ENCODE measurements at regions of chr12 and their contacts with region 1.

Region 1: GRCh38 chr12:56041552-56042429 is at the start of gene RPS26:
- DNase-seq: peak; percentile 81 to 99 (median 89)
- ATAC-seq: peak; percentile 92
- H3K4me3 ChIP-seq: peak within 1 kb of the TSS; percentile 95
- H3K4me3 Mint-ChIP-seq: peak within 1 kb of the TSS; percentile 94
- H3K27ac ChIP-seq: peak within 1 kb of the TSS; percentile 88 to 90
- H3K27ac Mint-ChIP-seq: peak within 1 kb of the TSS; percentile 86
- H3K4me1 ChIP-seq: peaks cover 32% of the 10 kb centered on the region
- H3K4me1 Mint-ChIP-seq: peaks cover 51% of the 10 kb centered on the region
- H3K27me3 ChIP-seq: no peaks in the 10 kb centered on the region
- H3K27me3 Mint-ChIP-seq: no peaks in the 10 kb centered on the region
- CTCF ChIP-seq: peak; percentile 43
- total RNA-seq, gene RPS26: 118 to 126 TPM

Region 2: GRCh38 chr12:54439521-54440255 is 1602.1 kb before region 1 on chr12:
- CTCF ChIA-PET with region 1: no interaction called
- POLR2A ChIA-PET with region 1: no interaction called
- intact Hi-C with region 1: no loop called
- DNase-seq: peak in 3 of 14 experiments; percentile 61 to 76 (median 75)
- ATAC-seq: peak; percentile 97
- H3K4me3 ChIP-seq: no peak overlapping the region
- H3K4me3 Mint-ChIP-seq: no peak overlapping the region
- H3K27ac ChIP-seq: no peak overlapping the region
- H3K27ac Mint-ChIP-seq: no peak overlapping the region
- H3K4me1 ChIP-seq: peaks cover 4% of the 10 kb centered on the region
- H3K4me1 Mint-ChIP-seq: peaks cover 5% of the 10 kb centered on the region
- H3K27me3 ChIP-seq: no peaks in the 10 kb centered on the region
- H3K27me3 Mint-ChIP-seq: peaks cover 6% of the 10 kb centered on the region
- CTCF ChIP-seq: peak; percentile 87

Region 3: DNA sequence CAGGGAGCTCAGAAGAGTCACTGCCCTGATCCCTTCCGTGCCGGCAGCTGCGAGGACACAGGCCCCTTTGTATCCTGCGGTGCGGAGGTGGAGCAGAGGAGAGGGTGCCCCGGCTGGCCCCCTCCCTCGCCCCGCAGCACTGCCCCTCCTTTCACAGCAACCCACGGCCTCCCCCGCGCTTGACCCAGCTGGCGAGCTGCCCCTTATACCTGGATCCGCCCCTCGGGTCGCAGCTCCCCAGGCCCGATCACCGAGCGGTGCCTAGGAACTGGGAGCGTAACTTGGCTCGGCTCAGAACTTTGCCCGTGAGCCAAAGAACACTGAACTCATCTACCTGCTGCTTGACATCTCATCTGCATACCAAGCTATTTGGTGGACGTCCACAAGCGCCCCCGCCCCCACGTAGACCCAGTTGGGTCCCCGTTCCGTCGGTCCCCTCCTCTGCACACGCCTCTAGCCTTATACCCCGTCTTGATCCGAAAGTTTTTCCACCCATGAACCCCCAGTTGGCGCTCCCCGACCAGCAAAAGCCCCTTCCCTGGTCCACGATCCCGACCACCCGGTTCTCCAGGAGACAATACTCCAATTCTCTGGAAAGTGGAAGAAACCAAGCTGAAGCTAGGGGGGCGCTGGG is 211.7 kb before region 1 on chr12:
- CTCF ChIA-PET with region 1: no interaction called
- POLR2A ChIA-PET with region 1: interaction called, 5 read pairs
- intact Hi-C with region 1: loop called in 1 of 2 experiments (anchors 5 kb)
- DNase-seq: peak in 11 of 14 experiments; percentile 4 to 54 (median 21)
- ATAC-seq: peak; percentile 23
- H3K4me3 ChIP-seq: peak overlapping the region; percentile 98
- H3K4me3 Mint-ChIP-seq: peak overlapping the region; percentile 100
- H3K27ac ChIP-seq: peak overlapping the region; percentile 52 to 70
- H3K27ac Mint-ChIP-seq: peak overlapping the region; percentile 88
- H3K4me1 ChIP-seq: peaks cover 58% of the 10 kb centered on the region
- H3K4me1 Mint-ChIP-seq: peaks cover 61% of the 10 kb centered on the region
- H3K27me3 ChIP-seq: no peaks in the 10 kb centered on the region
- H3K27me3 Mint-ChIP-seq: no peaks in the 10 kb centered on the region
- CTCF ChIP-seq: no peak

Region 4: GRCh38 chr12:55946553-55946952 is 95.2 kb before region 1 on chr12:
- CTCF ChIA-PET with region 1: no interaction called
- POLR2A ChIA-PET with region 1: no interaction called
- intact Hi-C with region 1: no loop called
- DNase-seq: no peak
- ATAC-seq: no peak
- H3K4me3 ChIP-seq: no peak overlapping the region
- H3K4me3 Mint-ChIP-seq: no peak overlapping the region
- H3K27ac ChIP-seq: no peak overlapping the region
- H3K27ac Mint-ChIP-seq: peak overlapping the region; percentile 72
- H3K4me1 ChIP-seq: peaks cover 19% of the 10 kb centered on the region
- H3K4me1 Mint-ChIP-seq: peaks cover 40% of the 10 kb centered on the region
- H3K27me3 ChIP-seq: no peaks in the 10 kb centered on the region
- H3K27me3 Mint-ChIP-seq: no peaks in the 10 kb centered on the region
- CTCF ChIP-seq: no peak

Region 5: DNA sequence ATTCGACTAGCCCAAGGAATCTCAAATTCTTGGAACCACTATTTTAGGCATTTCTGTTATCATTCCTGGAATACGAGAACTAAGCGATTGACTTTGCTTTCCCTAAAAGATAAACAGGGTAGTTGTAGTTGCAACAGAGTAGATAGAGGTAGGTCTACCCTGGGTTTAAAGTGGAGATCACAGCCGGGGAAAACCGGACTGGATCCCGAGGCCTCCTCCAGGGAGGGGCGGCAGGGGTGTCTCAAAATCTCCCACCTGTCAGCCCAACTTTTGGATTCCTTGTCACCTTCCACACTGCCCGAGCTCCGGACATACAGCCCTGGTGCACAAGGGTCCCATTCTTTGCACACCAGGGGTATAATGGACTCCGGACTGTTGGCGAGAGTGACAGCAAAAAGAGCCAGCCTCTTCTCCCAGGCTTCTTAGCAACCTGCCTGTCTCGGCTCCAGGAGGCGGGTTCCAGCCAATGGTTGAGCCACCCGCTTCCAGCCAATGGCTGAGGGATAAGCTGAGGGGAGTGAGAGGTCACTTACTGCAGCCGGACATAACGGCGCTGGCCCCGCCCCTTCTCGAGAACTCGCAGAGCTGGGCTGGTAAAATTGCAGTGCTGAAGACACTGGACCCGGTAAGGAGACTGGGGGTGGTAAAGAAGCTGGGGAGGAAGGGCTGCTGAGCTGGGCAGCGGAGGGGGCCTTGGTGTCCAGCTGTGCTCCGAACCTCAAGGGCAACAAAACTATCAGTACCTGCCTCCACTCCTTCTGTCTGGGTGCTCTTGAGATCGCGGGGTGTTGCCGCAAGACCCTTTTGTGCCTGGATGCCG is 44.9 kb before region 1 on chr12 and contains the start of gene SUOX:
- CTCF ChIA-PET with region 1: interaction called, 18 read pairs
- POLR2A ChIA-PET with region 1: interaction called, 12 read pairs
- intact Hi-C with region 1: loop called (anchors 1 to 2 kb)
- DNase-seq: peak in 5 of 14 experiments; percentile 8 to 69 (median 48)
- ATAC-seq: peak; percentile 33
- H3K4me3 ChIP-seq: peak within 1 kb of the TSS; percentile 43
- H3K4me3 Mint-ChIP-seq: peak within 1 kb of the TSS; percentile 51
- H3K27ac ChIP-seq: no peak within 1 kb of the TSS
- H3K27ac Mint-ChIP-seq: no peak within 1 kb of the TSS
- H3K4me1 ChIP-seq: peaks cover 17% of the 10 kb centered on the region
- H3K4me1 Mint-ChIP-seq: peaks cover 23% of the 10 kb centered on the region
- H3K27me3 ChIP-seq: peaks cover 5 to 12% of the 10 kb centered on the region in 2 experiments
- H3K27me3 Mint-ChIP-seq: peaks cover 20% of the 10 kb centered on the region
- CTCF ChIP-seq: no peak
- total RNA-seq, gene SUOX: 0.82 to 1.2 TPM

Region 6: DNA sequence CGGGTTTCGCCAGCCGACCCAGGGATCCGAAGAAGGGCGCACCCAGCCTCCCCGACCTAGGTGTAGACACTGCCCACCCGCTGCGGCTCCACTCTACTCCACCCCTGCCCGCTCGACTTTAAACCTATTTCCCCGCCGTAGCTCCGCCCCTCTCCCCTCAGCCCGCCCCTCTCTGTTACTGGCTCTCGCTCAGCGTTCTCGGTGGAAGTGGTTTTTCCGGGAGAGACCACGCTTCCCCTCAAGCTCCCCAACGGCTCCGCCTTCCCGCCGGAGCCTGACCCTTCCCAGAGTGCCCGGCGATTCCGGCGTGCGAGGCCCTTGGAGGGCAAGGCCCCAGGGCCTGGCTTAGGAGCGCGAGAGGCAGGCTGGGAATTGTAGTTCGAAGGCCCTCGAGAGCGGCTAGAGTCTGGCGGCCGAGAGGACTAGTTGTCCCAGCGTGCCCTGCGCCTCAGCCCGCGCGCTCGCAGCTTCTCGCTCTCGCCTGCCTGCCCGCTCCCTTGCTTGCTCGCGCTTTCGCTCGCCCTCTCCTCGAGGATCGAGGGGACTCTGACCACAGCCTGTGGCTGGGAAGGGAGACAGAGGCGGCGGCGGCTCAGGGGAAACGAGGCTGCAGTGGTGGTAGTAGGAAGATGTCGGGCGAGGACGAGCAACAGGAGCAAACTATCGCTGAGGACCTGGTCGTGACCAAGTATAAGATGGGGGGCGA is 62.5 kb after region 1 on chr12 and contains the start of gene PA2G4:
- CTCF ChIA-PET with region 1: interaction called, 24 read pairs
- POLR2A ChIA-PET with region 1: interaction called, 32 read pairs
- intact Hi-C with region 1: loop called (anchors 1 to 2 kb)
- DNase-seq: peak; percentile 89 to 99 (median 96)
- ATAC-seq: peak; percentile 88
- H3K4me3 ChIP-seq: peak within 1 kb of the TSS; percentile 90
- H3K4me3 Mint-ChIP-seq: peak within 1 kb of the TSS; percentile 93
- H3K27ac ChIP-seq: peak within 1 kb of the TSS; percentile 63 to 95
- H3K27ac Mint-ChIP-seq: peak within 1 kb of the TSS; percentile 100
- H3K4me1 ChIP-seq: peaks cover 48% of the 10 kb centered on the region
- H3K4me1 Mint-ChIP-seq: peaks cover 67% of the 10 kb centered on the region
- H3K27me3 ChIP-seq: no peaks in the 10 kb centered on the region
- H3K27me3 Mint-ChIP-seq: no peaks in the 10 kb centered on the region
- CTCF ChIP-seq: no peak
- total RNA-seq, gene PA2G4: 51.0 to 61.0 TPM

Region 7: DNA sequence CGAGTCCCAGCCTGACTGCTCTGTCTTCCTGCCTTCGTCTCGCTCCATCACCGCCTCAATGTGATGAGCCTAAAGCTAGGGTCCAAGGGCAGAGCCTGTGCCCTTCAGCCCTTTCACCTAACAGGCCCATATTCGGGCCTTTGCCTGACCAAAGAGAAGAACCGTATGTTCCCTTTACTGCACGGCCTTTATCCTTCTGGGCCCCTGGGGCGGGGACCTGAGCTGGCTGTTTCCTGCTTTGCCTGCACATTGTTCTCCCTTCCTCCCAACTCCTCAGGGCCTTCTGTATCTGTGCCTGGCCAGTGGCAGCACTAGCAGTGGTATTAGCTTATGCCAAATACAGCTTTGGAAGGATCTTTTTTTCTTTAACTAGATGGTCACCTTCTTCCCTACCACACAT is 102.1 kb after region 1 on chr12:
- CTCF ChIA-PET with region 1: no interaction called
- POLR2A ChIA-PET with region 1: no interaction called
- intact Hi-C with region 1: no loop called
- DNase-seq: no peak
- ATAC-seq: no peak
- H3K4me3 ChIP-seq: no peak overlapping the region
- H3K4me3 Mint-ChIP-seq: no peak overlapping the region
- H3K27ac ChIP-seq: peak overlapping the region in 1 of 2 donors; percentile 7
- H3K27ac Mint-ChIP-seq: peak overlapping the region; percentile 81
- H3K4me1 ChIP-seq: peaks cover 51% of the 10 kb centered on the region
- H3K4me1 Mint-ChIP-seq: peaks cover 42% of the 10 kb centered on the region
- H3K27me3 ChIP-seq: no peaks in the 10 kb centered on the region
- H3K27me3 Mint-ChIP-seq: no peaks in the 10 kb centered on the region
- CTCF ChIP-seq: no peak

Region 8: DNA sequence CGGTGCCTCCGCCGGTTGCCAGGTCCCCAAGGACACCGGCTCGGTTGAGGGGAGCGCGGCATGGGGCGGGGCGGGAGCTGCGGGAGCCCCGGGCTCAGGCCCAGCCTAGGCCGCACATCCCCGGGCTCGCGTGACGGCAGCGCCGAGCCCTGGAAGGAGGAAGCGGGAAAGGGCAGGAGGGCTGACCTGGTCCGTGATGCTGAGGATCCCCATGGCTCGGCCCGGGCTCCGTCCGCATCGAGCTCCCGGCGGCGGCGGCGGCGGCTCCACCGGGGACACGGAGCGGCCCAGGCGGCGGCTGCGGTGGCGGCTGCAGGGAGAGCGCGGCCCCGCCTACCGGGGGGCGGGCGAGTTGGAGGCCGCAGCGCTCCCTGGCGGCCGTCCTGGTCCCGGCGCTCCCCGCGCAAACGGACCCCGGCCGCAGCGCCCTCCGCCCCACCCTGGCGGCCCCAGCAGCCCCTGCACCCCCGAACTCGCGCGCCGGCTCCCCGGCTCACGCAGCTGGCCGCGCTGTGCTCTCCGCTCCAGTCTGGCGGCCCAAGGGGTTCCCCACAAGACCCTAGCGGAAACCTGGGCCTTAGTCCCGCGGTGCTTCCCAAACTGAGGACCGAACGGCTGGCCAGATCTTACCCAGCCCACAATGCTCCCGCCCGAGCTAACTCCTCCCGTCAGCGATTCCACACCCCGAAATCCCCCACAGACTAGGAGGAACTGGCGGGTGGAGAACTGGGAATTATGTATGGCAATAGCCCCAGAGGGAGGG is 216.4 kb after region 1 on chr12 and contains the start of gene ANKRD52:
- CTCF ChIA-PET with region 1: no interaction called
- POLR2A ChIA-PET with region 1: no interaction called
- intact Hi-C with region 1: loop called in 1 of 2 experiments (anchors 5 kb)
- DNase-seq: peak; percentile 59 to 94 (median 75)
- ATAC-seq: peak; percentile 94
- H3K4me3 ChIP-seq: peak within 1 kb of the TSS; percentile 96
- H3K4me3 Mint-ChIP-seq: peak within 1 kb of the TSS; percentile 98
- H3K27ac ChIP-seq: peak within 1 kb of the TSS; percentile 31 to 58
- H3K27ac Mint-ChIP-seq: peak within 1 kb of the TSS; percentile 77
- H3K4me1 ChIP-seq: peaks cover 27% of the 10 kb centered on the region
- H3K4me1 Mint-ChIP-seq: peaks cover 20% of the 10 kb centered on the region
- H3K27me3 ChIP-seq: no peaks in the 10 kb centered on the region
- H3K27me3 Mint-ChIP-seq: no peaks in the 10 kb centered on the region
- CTCF ChIP-seq: peak; percentile 26
- total RNA-seq, gene ANKRD52: 23.9 to 30.8 TPM

Region 9: GRCh38 chr12:56657416-56658379 is 615.9 kb after region 1 on chr12:
- CTCF ChIA-PET with region 1: no interaction called
- POLR2A ChIA-PET with region 1: no interaction called
- intact Hi-C with region 1: no loop called
- DNase-seq: no peak
- ATAC-seq: no peak
- H3K4me3 ChIP-seq: no peak overlapping the region
- H3K4me3 Mint-ChIP-seq: no peak overlapping the region
- H3K27ac ChIP-seq: no peak overlapping the region
- H3K27ac Mint-ChIP-seq: no peak overlapping the region
- H3K4me1 ChIP-seq: no peaks in the 10 kb centered on the region
- H3K4me1 Mint-ChIP-seq: no peaks in the 10 kb centered on the region
- H3K27me3 ChIP-seq: no peaks in the 10 kb centered on the region
- H3K27me3 Mint-ChIP-seq: no peaks in the 10 kb centered on the region
- CTCF ChIP-seq: no peak